ENCODE measurements at regions of chr9 and their contacts with region 1.

Region 1: GRCh38 chr9:35161713-35162604 is at the start of gene UNC13B:
- DNase-seq: peak; percentile 94
- H3K4me3 Mint-ChIP-seq: peak within 1 kb of the TSS; percentile 91
- H3K27ac Mint-ChIP-seq: peak within 1 kb of the TSS; percentile 94
- H3K4me1 Mint-ChIP-seq: peaks cover 18% of the 10 kb centered on the region
- H3K27me3 Mint-ChIP-seq: no peaks in the 10 kb centered on the region
- CTCF ChIP-seq: no peak
- total RNA-seq, gene UNC13B: 20.6 and 22.9 TPM in 2 replicates

Region 2: DNA sequence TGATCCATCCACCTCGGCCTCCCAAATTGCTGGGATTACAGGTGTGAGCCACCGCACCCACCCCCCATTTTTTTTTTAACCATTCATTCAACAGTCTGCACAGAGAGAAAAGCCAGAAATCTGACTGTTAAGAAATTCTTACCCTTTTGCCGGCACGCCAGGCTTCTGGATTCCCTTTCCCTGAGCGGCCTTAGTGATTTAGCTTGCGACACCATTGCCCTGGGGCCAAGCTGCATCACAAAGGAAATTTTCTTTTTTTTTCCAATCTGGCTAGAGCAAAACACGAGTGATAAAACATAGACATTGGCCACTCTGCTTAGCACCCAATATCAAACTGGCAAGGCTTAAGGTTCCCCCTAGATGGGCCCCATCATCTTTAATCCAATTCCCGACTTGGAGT is 25.1 kb before region 1 on chr9:
- CTCF ChIA-PET with region 1: interaction called, 6 read pairs
- POLR2A ChIA-PET with region 1: interaction called, 10 read pairs
- intact Hi-C with region 1: no loop called
- DNase-seq: peak; percentile 35
- H3K4me3 Mint-ChIP-seq: no peak overlapping the region
- H3K27ac Mint-ChIP-seq: no peak overlapping the region
- H3K4me1 Mint-ChIP-seq: no peaks in the 10 kb centered on the region
- H3K27me3 Mint-ChIP-seq: no peaks in the 10 kb centered on the region
- CTCF ChIP-seq: no peak

Region 3: GRCh38 chr9:35258676-35259474 is 96.9 kb after region 1 on chr9:
- CTCF ChIA-PET with region 1: interaction called, 10 read pairs
- POLR2A ChIA-PET with region 1: interaction called, 8 read pairs
- intact Hi-C with region 1: no loop called
- DNase-seq: peak; percentile 81
- H3K4me3 Mint-ChIP-seq: no peak overlapping the region
- H3K27ac Mint-ChIP-seq: no peak overlapping the region
- H3K4me1 Mint-ChIP-seq: peaks cover 8% of the 10 kb centered on the region
- H3K27me3 Mint-ChIP-seq: no peaks in the 10 kb centered on the region
- CTCF ChIP-seq: peak; percentile 71

Region 4: GRCh38 chr9:35470894-35471293 is 308.9 kb after region 1 on chr9:
- CTCF ChIA-PET with region 1: no interaction called
- POLR2A ChIA-PET with region 1: interaction called, 20 read pairs
- intact Hi-C with region 1: loop called (anchors 5 kb)
- DNase-seq: peak; percentile 91
- H3K4me3 Mint-ChIP-seq: peak overlapping the region; percentile 47
- H3K27ac Mint-ChIP-seq: peak overlapping the region; percentile 59
- H3K4me1 Mint-ChIP-seq: peaks cover 25% of the 10 kb centered on the region
- H3K27me3 Mint-ChIP-seq: no peaks in the 10 kb centered on the region
- CTCF ChIP-seq: no peak